ENCODE measurements at regions of chr9 and their contacts with region 1.

Region 1: GRCh38 chr9:137029058-137029936 is 1.3 kb upstream of the ABCA2 start:
- DNase-seq: peak; percentile 84
- ATAC-seq: peak; percentile 53
- H3K4me3 Mint-ChIP-seq: peak overlapping the region; percentile 63
- H3K27ac Mint-ChIP-seq: peak overlapping the region; percentile 32
- H3K4me1 Mint-ChIP-seq: peaks cover 46% of the 10 kb centered on the region
- H3K27me3 Mint-ChIP-seq: no peaks in the 10 kb centered on the region
- CTCF ChIP-seq: peak; percentile 65

Region 2: DNA sequence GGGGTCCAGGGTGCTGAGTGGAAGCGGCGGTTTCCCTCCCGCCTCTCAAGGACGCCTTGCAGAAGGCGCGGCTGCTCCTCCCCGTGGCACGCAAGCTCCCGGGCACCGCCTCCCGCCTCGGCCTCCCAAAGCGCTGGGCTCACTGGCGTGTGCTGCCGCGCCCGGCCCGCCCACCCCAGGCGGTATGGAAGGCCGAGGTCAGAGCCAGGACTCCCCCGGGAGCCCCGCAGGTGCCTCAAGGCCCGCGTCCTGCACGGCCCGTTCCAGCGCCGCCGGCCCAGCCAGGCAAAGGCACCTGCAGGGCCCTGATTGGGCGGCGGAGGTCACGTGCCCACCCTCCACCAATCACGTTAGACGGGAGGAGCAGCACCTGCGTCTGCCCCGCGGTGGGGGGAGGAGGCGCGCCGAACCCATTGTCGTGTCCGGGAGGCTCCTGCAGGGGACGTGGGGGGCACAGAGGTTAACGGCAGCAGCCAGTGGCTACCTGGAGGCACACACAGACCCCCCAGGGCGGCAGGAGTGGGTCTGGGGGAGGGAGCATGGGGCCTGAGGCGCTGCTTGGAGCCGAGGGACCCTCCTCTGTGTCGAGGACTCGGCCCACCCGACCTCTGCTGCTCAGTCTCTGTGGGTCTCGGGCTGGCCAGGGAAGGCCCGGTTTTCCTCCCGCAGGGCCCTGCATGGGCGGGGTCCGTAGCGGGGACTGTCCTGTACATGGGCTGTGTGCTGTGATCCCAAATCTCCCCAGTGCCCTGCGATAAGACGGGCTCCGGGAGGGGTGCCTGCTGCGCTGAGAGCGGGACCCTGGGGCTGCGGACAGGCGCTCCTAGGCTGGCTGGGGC is 79.3 kb before region 1 on chr9:
- CTCF ChIA-PET with region 1: interaction called, 82 read pairs
- POLR2A ChIA-PET with region 1: no interaction called
- intact Hi-C with region 1: no loop called
- DNase-seq: peak; percentile 99
- ATAC-seq: peak; percentile 97
- H3K4me3 Mint-ChIP-seq: peak overlapping the region; percentile 82
- H3K27ac Mint-ChIP-seq: peak overlapping the region; percentile 83
- H3K4me1 Mint-ChIP-seq: peaks cover 6% of the 10 kb centered on the region
- H3K27me3 Mint-ChIP-seq: no peaks in the 10 kb centered on the region
- CTCF ChIP-seq: peak; percentile 37

Region 3: GRCh38 chr9:136991993-136992818 is 37.1 kb before region 1 on chr9 and contains the start of gene PAXX:
- CTCF ChIA-PET with region 1: interaction called, 48 read pairs
- POLR2A ChIA-PET with region 1: no interaction called
- intact Hi-C with region 1: no loop called
- DNase-seq: peak; percentile 96
- ATAC-seq: peak; percentile 92
- H3K4me3 Mint-ChIP-seq: peak within 1 kb of the TSS; percentile 86
- H3K27ac Mint-ChIP-seq: peak within 1 kb of the TSS; percentile 88
- H3K4me1 Mint-ChIP-seq: peaks cover 22% of the 10 kb centered on the region
- H3K27me3 Mint-ChIP-seq: no peaks in the 10 kb centered on the region
- CTCF ChIP-seq: no peak
- total RNA-seq, gene PAXX: 60.5 to 61.8 TPM

Region 4: GRCh38 chr9:137007108-137007815 is 22.0 kb before region 1 on chr9:
- CTCF ChIA-PET with region 1: interaction called, 31 read pairs
- POLR2A ChIA-PET with region 1: no interaction called
- intact Hi-C with region 1: no loop called
- DNase-seq: no peak
- ATAC-seq: no peak
- H3K4me3 Mint-ChIP-seq: no peak overlapping the region
- H3K27ac Mint-ChIP-seq: no peak overlapping the region
- H3K4me1 Mint-ChIP-seq: peaks cover 13% of the 10 kb centered on the region
- H3K27me3 Mint-ChIP-seq: no peaks in the 10 kb centered on the region
- CTCF ChIP-seq: no peak

Region 5: GRCh38 chr9:137046098-137046787 is 16.9 kb after region 1 on chr9 and contains the start of gene NPDC1:
- CTCF ChIA-PET with region 1: interaction called, 37 read pairs
- POLR2A ChIA-PET with region 1: interaction called, 6 read pairs
- intact Hi-C with region 1: no loop called
- DNase-seq: peak; percentile 92
- ATAC-seq: peak; percentile 84
- H3K4me3 Mint-ChIP-seq: peak within 1 kb of the TSS; percentile 63
- H3K27ac Mint-ChIP-seq: no peak within 1 kb of the TSS
- H3K4me1 Mint-ChIP-seq: peaks cover 10% of the 10 kb centered on the region
- H3K27me3 Mint-ChIP-seq: peaks cover 42% of the 10 kb centered on the region
- CTCF ChIP-seq: peak; percentile 83
- total RNA-seq, gene NPDC1: 18.2 to 21.2 TPM

Region 6: GRCh38 chr9:137086531-137087408 is 57.5 kb after region 1 on chr9 and contains the start of gene MAN1B1:
- CTCF ChIA-PET with region 1: interaction called, 13 read pairs
- POLR2A ChIA-PET with region 1: interaction called, 3 read pairs
- intact Hi-C with region 1: no loop called
- DNase-seq: peak; percentile 100
- ATAC-seq: peak; percentile 86
- H3K4me3 Mint-ChIP-seq: peak within 1 kb of the TSS; percentile 90
- H3K27ac Mint-ChIP-seq: peak within 1 kb of the TSS; percentile 94
- H3K4me1 Mint-ChIP-seq: peaks cover 38% of the 10 kb centered on the region
- H3K27me3 Mint-ChIP-seq: no peaks in the 10 kb centered on the region
- CTCF ChIP-seq: no peak
- total RNA-seq, gene MAN1B1: 31.1 to 33.2 TPM

Measured in activated CD8-positive, alpha-beta T cell treated with anti-CD3 and anti-CD28 coated beads for 36 hours (primary cell).